SK-N-SH (cell line): ENCODE measurements at regions of chr3 and their contacts with region 1.

Region 1: GRCh38 chr3:14461748-14462324 is 59.4 kb downstream of the SLC6A6 start:
- DNase-seq: peak; percentile 86
- H3K4me3 ChIP-seq: no peak overlapping the region
- H3K27ac ChIP-seq: peak overlapping the region in 1 of 2 experiments; percentile 76; a peak in 1 of 4 replicates
- H3K4me1 ChIP-seq: peaks cover 9 to 17% of the 10 kb centered on the region in 2 experiments; a peak in 3 of 4 replicates
- H3K27me3 ChIP-seq: no peaks in the 10 kb centered on the region
- CTCF ChIP-seq: peak; percentile 78
- EP300 ChIP-seq: no peak
- RAD21 ChIP-seq: peak; percentile 88

Region 2: GRCh38 chr3:14267723-14268371 is 194.0 kb before region 1 on chr3:
- CTCF ChIA-PET with region 1: interaction called, 105 read pairs
- POLR2A ChIA-PET with region 1: no interaction called
- DNase-seq: no peak
- H3K4me3 ChIP-seq: no peak overlapping the region
- H3K27ac ChIP-seq: no peak overlapping the region
- H3K4me1 ChIP-seq: no peaks in the 10 kb centered on the region; a peak in 1 of 4 replicates
- H3K27me3 ChIP-seq: 0 out of 2 replicates have a peak, but pooled peaks cover 3% of the 10 kb centered on the region
- CTCF ChIP-seq: no peak
- EP300 ChIP-seq: no peak
- RAD21 ChIP-seq: no peak

Region 3: DNA sequence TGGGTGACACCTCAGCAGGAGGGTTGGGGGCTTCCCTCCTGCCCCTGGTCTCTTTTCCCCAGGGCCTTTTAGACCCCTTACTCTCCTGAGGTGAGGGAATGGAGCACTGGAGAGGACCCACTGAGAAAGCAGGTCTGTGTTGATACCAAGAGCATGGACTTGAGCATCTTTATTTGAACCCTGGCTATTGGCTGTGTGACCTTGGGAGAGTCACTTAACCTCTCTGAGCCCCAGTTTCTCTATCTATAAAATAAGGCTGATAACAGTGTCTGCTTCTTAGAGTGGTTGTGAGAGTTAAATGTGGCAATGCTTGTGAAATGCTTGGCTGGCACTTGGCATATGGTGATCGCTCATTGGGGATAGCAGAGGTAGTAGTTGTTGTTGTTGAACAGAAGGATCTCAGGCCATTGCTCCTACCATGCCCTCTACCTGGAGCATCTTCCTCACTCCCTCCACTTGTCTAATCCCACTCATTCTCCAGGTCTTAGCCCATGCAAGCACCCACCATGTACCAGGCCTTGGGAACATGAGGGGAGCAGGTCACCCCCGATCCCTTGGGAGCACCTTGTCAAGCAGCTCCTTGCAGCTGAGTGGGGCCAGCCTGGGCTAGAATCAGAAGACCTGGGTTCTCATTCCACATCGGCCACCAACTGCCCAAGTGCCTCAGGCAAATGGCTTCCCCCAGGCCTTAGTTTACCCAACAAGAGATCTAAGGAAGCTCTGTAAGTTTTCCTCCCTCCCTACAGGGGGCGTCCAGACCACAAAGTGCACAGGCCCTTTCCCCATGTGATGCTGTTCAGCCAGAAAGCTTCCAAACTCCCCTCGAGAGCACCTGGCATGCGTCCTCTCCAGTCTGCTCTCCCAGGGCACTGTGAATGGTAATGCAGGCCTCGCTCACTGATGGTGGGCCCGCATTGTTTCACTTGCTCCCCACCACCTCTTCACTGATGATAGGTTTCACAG is 186.6 kb before region 1 on chr3:
- CTCF ChIA-PET with region 1: interaction called, 20 read pairs
- POLR2A ChIA-PET with region 1: no interaction called
- DNase-seq: peak; percentile 43
- H3K4me3 ChIP-seq: no peak overlapping the region; a peak in 1 of 4 replicates
- H3K27ac ChIP-seq: no peak overlapping the region
- H3K4me1 ChIP-seq: peaks cover 0 to 12% of the 10 kb centered on the region in 2 experiments; a peak in 2 of 4 replicates
- H3K27me3 ChIP-seq: 0 out of 2 replicates have a peak, but pooled peaks cover 3% of the 10 kb centered on the region
- CTCF ChIP-seq: peak; percentile 36
- EP300 ChIP-seq: no peak
- RAD21 ChIP-seq: peak; percentile 45

Region 4: DNA sequence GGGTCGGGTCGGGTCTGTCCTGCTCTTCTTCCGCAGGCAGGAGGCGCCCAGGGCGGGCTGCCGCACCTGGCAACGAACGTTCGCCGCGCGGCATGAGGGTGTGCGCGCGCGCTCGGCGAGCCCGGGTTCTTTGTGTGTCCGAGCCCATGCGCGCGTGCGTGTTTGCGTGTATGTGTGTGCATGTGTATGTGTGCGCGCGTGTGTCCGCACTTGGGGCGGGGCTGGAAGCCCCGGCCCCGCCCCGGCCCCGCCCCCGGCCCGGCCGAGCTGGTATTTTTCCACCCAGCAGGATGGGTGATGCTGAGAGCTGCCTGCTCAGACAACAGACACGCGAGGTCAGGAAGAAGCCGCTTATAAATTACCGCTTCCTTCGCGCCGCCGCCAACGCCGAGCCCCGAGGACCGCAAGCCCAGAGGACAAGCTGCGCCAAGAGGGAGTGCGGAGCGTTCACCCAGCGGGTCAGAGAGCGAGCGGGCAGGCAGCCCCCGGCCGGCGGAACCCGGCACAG is 59.5 kb before region 1 on chr3 and contains the start of gene SLC6A6:
- CTCF ChIA-PET with region 1: interaction called, 15 read pairs
- POLR2A ChIA-PET with region 1: no interaction called
- DNase-seq: peak; percentile 96
- H3K4me3 ChIP-seq: peak within 1 kb of the TSS; percentile 48 to 86
- H3K27ac ChIP-seq: peak within 1 kb of the TSS; percentile 84 to 91
- H3K4me1 ChIP-seq: peaks cover 13 to 24% of the 10 kb centered on the region in 2 experiments; a peak in 3 of 4 replicates
- H3K27me3 ChIP-seq: no peaks in the 10 kb centered on the region
- CTCF ChIP-seq: peak; percentile 42
- EP300 ChIP-seq: peak in 1 of 2 experiments; percentile 23; a peak in 1 of 4 replicates
- RAD21 ChIP-seq: peak; percentile 24; the same call in 1 of the 2 replicates
- polyA plus RNA-seq, gene SLC6A6: 19.1 and 22.0 TPM in 2 replicates

Region 5: DNA sequence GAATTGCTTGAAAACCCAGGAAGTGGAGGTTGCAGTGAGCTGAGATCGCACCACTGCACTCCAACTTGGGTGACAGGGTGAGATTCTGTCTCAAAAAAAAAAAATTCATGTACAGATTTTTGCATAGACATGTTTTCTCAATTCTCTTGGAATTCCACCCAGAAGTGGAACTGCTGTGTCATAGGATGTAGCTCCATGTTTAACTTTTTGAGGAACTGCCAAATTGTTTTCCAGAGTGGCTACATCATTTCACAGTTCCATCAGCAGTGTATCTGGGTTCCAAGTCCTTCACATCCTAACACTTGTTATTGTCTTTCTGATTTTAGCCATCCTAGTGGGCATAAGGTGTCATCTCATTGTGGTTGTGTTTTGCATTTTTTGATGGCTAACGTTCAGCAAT is 754.2 kb after region 1 on chr3:
- CTCF ChIA-PET with region 1: no interaction called
- POLR2A ChIA-PET with region 1: no interaction called
- DNase-seq: no peak
- H3K4me3 ChIP-seq: no peak overlapping the region
- H3K27ac ChIP-seq: no peak overlapping the region
- H3K4me1 ChIP-seq: no peaks in the 10 kb centered on the region
- H3K27me3 ChIP-seq: no peaks in the 10 kb centered on the region
- CTCF ChIP-seq: no peak
- EP300 ChIP-seq: no peak
- RAD21 ChIP-seq: no peak